Spleen (tissue), 13 donors: ENCODE measurements at regions of chr18 and their contacts with region 1.

Region 1: DNA sequence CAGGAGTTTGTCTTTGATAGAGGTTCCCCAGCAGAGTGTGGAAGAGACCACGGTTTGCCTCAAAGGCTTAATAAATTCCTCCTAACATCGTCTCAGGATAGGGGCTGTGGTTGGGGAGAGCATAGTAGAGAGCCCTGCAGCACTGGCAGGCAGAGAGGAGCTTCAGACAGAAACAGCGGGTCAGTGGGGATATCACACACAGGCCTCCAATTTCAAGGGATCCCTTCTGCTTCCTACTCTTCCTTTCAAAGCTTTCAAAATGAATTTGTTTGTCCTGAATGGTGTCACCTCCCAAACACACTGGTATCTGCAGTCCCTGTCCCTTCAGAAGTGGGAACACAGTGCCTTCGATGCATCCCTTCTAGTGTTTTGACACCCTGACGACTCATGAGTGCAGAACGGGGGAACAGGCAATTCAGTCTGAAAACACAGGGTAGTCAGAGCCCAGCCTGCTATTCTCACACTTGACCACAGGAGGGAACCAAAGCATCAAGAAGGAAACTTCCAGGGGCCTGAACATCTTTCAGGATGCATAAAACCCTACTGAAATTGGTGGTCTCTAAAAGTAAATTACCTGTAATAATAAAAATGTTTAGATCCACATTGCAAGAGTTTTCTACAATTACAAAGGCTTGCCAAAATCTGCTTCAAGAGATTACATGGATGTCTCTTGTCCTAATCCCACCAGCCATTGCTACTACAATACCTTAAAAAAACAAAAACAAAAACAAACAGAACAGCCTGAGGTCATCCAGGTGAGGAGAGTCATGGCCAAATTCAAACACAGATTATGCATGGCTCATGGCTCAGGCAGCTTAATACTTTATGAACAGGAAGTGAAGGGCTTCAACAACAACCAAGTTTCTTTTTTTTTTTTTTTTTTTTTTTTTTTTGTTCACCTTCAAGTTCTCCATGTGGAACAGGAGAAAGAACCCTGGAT is 49.8 kb downstream of the SLC14A2 start:
- DNase-seq: no peak
- H3K4me3 ChIP-seq: no peak overlapping the region
- H3K27ac ChIP-seq: peak overlapping the region in 6 of 8 donors; percentile 39 to 79 (median 72)
- H3K4me1 ChIP-seq: peaks cover 25 to 55% (median 35%) of the 10 kb centered on the region in 6 donors
- H3K27me3 ChIP-seq: no peaks in the 10 kb centered on the region
- CTCF ChIP-seq: peak; percentile 90 to 98 (median 94)
- POLR2A ChIP-seq: no peak

Region 2: GRCh38 chr18:45879681-45880655 is 214.9 kb after region 1 on chr18:
- intact Hi-C with region 1: loop called (anchors 10 kb)
- DNase-seq: peak; percentile 94
- H3K4me3 ChIP-seq: no peak overlapping the region
- H3K27ac ChIP-seq: peak overlapping the region in 4 of 8 donors; percentile 6 to 46 (median 34)
- H3K4me1 ChIP-seq: peaks cover 4 to 23% (median 15%) of the 10 kb centered on the region in 6 donors
- H3K27me3 ChIP-seq: no peaks in the 10 kb centered on the region
- CTCF ChIP-seq: peak; percentile 86 to 100 (median 99)
- POLR2A ChIP-seq: no peak

Region 3: DNA sequence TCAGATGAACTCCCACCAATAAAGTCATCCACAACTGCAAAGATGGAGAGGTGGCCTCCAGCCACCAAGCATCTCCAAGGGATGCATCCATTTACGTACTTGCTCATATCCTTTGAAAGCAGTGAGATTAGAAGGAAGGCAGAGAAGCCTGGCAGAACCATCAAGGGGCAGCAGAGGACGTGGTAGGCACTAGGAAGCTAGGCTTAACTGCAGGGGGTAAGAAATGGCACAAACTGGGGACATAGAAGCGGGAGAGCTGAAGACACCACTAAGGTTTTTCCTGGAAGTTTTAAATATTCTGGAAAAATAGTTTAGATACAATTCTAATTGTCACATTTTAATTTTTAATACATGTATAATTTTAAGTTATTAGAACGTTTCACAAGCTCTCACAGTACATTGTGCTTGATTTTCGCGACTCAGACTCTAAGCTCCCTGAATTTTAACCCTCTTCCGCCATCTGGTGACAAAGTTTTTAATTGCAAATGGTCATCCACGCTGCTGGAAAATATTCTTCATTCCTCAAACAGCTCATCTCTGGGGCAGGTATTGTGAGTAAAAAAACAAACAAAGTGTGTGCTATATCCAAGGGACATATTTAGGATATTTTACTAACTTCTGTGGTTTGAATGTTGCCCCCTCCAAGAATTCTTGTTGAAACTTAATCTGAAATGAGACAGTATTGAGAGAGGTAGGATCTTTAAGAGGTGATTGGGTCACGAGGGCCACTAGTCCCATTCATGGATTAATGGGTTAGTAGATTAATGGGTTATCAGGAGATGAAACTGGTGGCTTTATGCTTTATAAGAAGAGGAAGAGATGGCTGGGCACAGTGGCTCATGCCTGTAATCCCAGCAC is 408.6 kb after region 1 on chr18:
- intact Hi-C with region 1: loop called (anchors 10 kb)
- DNase-seq: peak; percentile 50
- H3K4me3 ChIP-seq: peak overlapping the region in 1 of 8 donors; percentile 92
- H3K27ac ChIP-seq: peak overlapping the region in 6 of 8 donors; percentile 92 to 97 (median 94)
- H3K4me1 ChIP-seq: peaks cover 12 to 55% (median 46%) of the 10 kb centered on the region in 6 donors
- H3K27me3 ChIP-seq: peaks cover 0 to 20% (median 0%) of the 10 kb centered on the region in 7 donors
- CTCF ChIP-seq: peak; percentile 38 to 83 (median 72)
- POLR2A ChIP-seq: no peak